Aorta (tissue), 5 donors: ENCODE measurements at regions of chr13 and their contacts with region 1.

Region 1: DNA sequence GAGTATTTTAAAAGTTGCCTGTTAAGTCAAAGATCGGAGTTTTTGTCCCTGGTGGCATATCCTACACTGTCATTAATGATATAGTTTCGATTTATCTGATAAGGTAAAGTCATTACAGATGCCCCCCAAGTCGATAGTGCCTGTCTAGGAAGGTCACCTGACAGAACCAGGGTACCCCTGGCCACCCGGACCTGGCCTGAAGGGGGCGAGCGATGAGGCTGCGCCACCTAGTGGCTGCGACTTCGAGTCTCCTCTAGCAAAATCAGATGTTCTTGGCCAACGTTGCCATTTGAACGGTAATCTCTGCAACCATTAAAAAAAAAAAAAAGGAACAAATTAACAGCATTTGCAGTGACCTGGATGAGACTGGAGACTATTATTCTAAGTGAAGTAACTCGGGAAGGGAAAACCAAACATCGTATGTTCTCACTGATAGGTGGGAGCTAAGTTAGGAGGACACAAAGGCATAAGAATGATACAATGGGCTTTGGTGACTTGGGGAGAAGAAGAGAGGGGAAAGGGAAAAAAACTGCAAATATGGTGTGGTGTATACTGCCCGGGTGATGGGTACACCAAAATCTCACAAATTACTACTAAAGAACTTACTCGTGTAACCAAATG is 565.1 kb downstream of the LIG4 start:
- DNase-seq: peak; percentile 52 to 83
- ATAC-seq: peak; percentile 81
- H3K4me3 ChIP-seq: no peak overlapping the region
- H3K27ac ChIP-seq: no peak overlapping the region
- H3K4me1 ChIP-seq: no peaks in the 10 kb centered on the region
- H3K27me3 ChIP-seq: peaks cover 0 to 3% of the 10 kb centered on the region in 2 donors

Region 2: GRCh38 chr13:107205303-107206104 is 444.7 kb before region 1 on chr13:
- intact Hi-C with region 1: loop called (anchors 5 kb)
- DNase-seq: peak; percentile 67 to 89
- ATAC-seq: no peak
- H3K4me3 ChIP-seq: no peak overlapping the region
- H3K27ac ChIP-seq: no peak overlapping the region
- H3K4me1 ChIP-seq: no peaks in the 10 kb centered on the region
- H3K27me3 ChIP-seq: peaks cover 0 to 2% of the 10 kb centered on the region in 2 donors

Region 3: DNA sequence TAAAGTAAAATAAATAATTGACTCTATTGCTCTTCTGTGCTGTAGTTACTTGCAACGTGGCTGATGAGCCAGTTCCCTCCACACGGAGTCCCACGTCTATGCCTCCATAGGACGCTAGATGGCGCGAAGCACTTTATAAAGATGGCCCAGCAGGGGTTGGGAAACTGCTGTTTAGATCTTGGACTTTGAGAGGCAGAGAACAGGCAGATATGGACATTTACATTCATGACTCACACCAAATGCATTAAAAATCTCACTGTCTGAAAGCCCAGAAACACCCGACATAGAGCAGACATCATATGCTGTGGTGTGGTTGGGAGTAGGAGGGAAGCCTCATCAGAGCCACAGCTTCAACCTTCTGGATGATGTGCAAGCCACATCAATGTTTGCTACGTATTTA is 439.1 kb before region 1 on chr13:
- intact Hi-C with region 1: loop called (anchors 5 kb)
- DNase-seq: peak; percentile 73 to 85
- ATAC-seq: peak; percentile 87
- H3K4me3 ChIP-seq: no peak overlapping the region
- H3K27ac ChIP-seq: no peak overlapping the region
- H3K4me1 ChIP-seq: no peaks in the 10 kb centered on the region
- H3K27me3 ChIP-seq: no peaks in the 10 kb centered on the region

Region 4: DNA sequence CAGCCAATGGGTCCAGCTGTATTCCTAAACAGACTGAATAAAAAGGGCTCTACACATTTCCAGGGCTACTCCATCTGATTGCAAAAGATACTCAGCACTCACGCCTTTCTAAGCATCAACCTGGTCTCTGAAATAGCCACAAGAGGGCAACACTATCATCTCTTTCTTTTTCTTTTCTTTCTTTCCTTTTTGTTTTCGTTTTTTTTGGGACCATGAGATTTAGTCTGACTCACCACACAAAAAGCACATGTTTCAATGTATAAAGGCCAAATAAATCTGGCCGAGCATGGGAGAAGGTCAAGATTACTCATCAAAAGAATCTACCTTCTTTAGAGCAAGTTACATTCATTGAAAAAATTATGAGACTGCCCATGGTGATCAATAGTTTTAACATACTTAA is 276.6 kb before region 1 on chr13:
- intact Hi-C with region 1: loop called (anchors 1 kb)
- DNase-seq: no peak
- ATAC-seq: peak; percentile 70
- H3K4me3 ChIP-seq: no peak overlapping the region
- H3K27ac ChIP-seq: no peak overlapping the region
- H3K4me1 ChIP-seq: no peaks in the 10 kb centered on the region
- H3K27me3 ChIP-seq: no peaks in the 10 kb centered on the region